Caco-2 (cell line): ENCODE measurements at regions of chr21 and their contacts with region 1.

Region 1: GRCh38 chr21:27362249-27362648 is 395.4 kb upstream of the ADAMTS5 start:
- DNase-seq: peak in 1 of 2 experiments; percentile 20
- H3K4me3 ChIP-seq: no peak overlapping the region
- H3K4me3 Mint-ChIP-seq: no peak overlapping the region
- H3K27ac Mint-ChIP-seq: no peak overlapping the region
- H3K4me1 ChIP-seq: peaks cover 30% of the 10 kb centered on the region
- H3K4me1 Mint-ChIP-seq: peaks cover 8% of the 10 kb centered on the region
- H3K27me3 ChIP-seq: no peaks in the 10 kb centered on the region
- H3K27me3 Mint-ChIP-seq: no peaks in the 10 kb centered on the region
- CTCF ChIP-seq: peak in 1 of 2 experiments; percentile 33

Region 2: DNA sequence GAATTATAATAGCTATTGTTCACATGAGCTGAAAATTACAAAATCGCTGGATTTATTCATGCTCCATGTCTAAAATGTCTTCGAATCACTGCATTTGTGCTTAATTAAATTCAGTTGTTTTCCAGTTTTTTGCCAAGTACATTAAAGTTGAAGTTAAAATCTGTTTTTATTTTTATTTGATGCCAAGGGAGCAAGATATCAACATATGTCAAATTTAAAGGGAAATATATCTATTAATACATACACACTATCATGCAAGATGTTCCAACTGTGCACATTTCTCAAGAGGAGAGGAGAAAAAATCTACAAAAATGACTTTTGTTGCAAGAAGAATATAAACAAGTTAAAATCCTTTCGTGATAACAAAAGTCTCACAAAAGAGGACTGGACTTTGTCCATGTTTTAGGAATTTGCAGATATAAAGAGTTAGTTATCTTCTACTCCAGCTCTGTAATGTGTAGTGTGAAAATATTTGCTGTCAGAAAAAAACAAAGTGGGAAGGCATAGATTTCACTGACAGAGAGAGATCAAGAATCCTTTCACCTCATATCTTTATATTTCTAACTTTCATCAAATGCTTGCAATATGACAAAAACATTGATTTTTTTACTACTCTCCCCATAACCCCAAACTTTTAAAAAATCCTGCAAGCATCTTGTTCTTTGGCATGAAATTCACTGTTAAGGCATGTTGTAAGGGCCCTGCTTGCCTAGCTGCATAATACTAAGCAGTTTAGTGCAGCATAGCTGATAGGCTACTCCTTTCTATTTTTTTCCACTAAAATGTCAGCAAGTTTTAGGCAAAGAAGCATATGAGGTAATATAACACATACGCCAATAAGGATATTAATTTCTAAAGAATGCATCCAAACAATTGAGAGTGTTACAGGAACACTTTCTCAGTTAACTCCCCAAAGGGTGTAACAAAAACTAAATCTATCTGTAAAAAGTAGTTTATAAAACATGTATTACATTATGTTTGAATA is 55.2 kb before region 1 on chr21:
- CTCF ChIA-PET with region 1: no interaction called
- POLR2A ChIA-PET with region 1: no interaction called
- intact Hi-C with region 1: loop called (anchors 5 kb)
- DNase-seq: peak in 1 of 2 experiments; percentile 5
- H3K4me3 ChIP-seq: no peak overlapping the region
- H3K4me3 Mint-ChIP-seq: peak overlapping the region; percentile 37
- H3K27ac Mint-ChIP-seq: peak overlapping the region; percentile 16
- H3K4me1 ChIP-seq: peaks cover 48% of the 10 kb centered on the region
- H3K4me1 Mint-ChIP-seq: peaks cover 6% of the 10 kb centered on the region
- H3K27me3 ChIP-seq: no peaks in the 10 kb centered on the region
- H3K27me3 Mint-ChIP-seq: no peaks in the 10 kb centered on the region
- CTCF ChIP-seq: no peak

Region 3: GRCh38 chr21:27380303-27380702 is 18.1 kb after region 1 on chr21:
- CTCF ChIA-PET with region 1: no interaction called
- POLR2A ChIA-PET with region 1: no interaction called
- intact Hi-C with region 1: no loop called
- DNase-seq: no peak
- H3K4me3 ChIP-seq: no peak overlapping the region
- H3K4me3 Mint-ChIP-seq: no peak overlapping the region
- H3K27ac Mint-ChIP-seq: no peak overlapping the region
- H3K4me1 ChIP-seq: 0 out of 2 replicates have a peak, but pooled peaks cover 5% of the 10 kb centered on the region
- H3K4me1 Mint-ChIP-seq: no peaks in the 10 kb centered on the region
- H3K27me3 ChIP-seq: no peaks in the 10 kb centered on the region
- H3K27me3 Mint-ChIP-seq: no peaks in the 10 kb centered on the region
- CTCF ChIP-seq: no peak

Region 4: DNA sequence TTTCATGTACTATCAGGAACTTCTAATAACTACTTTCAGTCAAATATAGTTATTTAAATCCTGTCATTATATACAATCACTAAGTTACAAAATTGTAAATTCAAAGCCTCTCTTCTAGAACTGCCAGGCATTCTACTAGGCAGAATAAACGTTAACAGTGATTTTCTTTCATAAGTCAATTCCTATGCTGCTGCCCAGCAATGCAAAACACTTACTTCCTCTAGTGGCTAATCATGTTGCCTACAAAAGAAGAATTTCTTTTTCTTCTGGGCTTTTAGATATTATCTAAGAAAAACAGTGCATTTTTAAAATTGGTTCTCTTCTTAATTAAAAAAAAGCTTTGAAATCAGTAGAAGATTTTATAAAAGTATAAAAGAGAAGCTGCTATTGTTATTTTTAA is 114.4 kb after region 1 on chr21:
- CTCF ChIA-PET with region 1: interaction called, 3 read pairs
- POLR2A ChIA-PET with region 1: no interaction called
- intact Hi-C with region 1: loop called (anchors 10 kb)
- DNase-seq: no peak
- H3K4me3 ChIP-seq: no peak overlapping the region
- H3K4me3 Mint-ChIP-seq: no peak overlapping the region
- H3K27ac Mint-ChIP-seq: no peak overlapping the region
- H3K4me1 ChIP-seq: no peaks in the 10 kb centered on the region
- H3K4me1 Mint-ChIP-seq: peaks cover 6% of the 10 kb centered on the region
- H3K27me3 ChIP-seq: no peaks in the 10 kb centered on the region
- H3K27me3 Mint-ChIP-seq: no peaks in the 10 kb centered on the region
- CTCF ChIP-seq: peak in 1 of 2 experiments; percentile 31